ENCODE measurements at regions of chr15 and their contacts with region 1.

Region 1: GRCh38 chr15:76024021-76024768 is 12.0 kb upstream of the NRG4 start:
- DNase-seq: no peak
- H3K4me3 ChIP-seq: no peak overlapping the region
- H3K4me1 ChIP-seq: no peaks in the 10 kb centered on the region
- H3K27me3 ChIP-seq: no peaks in the 10 kb centered on the region

Region 2: DNA sequence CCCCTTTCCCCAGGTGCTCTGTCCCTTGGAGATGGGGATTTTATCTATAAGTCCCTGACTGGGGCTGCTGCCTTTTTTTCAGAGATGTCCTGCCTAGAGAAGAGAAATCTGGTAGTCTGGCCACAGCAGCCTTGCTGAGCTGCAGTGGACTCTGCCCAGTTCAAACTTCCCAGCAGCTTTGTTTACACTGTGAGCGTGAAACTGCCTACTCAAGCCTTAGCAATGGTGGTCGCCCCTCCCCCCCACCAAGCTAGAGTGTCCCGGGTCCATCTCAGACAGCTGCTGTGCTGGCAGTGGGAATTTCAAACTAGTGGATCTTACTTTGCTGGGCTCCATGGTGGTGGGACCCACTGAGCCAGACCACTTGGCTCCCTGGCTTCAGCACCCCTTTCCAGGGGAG is 74.5 kb after region 1 on chr15:
- in situ Hi-C with region 1: loop called (anchors 10 kb)
- DNase-seq: no peak
- H3K4me3 ChIP-seq: no peak overlapping the region
- H3K4me1 ChIP-seq: no peaks in the 10 kb centered on the region
- H3K27me3 ChIP-seq: peaks cover 26% of the 10 kb centered on the region

Measured in HAP-1 (cell line).